Tibial artery (tissue), 4 donors: ENCODE measurements at regions of chr6 and their contacts with region 1.

Region 1: DNA sequence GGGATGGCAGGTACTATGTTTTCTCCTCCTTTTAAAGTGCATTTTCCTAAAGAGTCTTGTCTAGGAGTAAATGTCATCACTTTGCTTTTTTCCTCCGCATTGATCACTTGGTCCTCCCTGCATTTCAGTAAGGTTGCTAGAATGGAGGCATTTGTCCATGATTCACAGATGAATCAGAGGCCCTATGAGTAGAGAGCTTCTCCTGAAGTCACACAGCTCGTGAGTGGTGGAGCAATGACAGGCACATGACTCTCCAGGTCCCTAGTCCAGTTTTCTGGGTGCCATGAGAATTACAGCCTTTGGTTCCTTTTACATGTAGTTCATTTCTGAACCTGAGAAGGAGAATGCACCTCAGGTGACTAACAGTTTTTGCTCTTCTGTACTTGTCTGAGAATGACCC is 50.5 kb downstream of the HLA-A start:
- DNase-seq: no peak
- H3K4me3 ChIP-seq: no peak overlapping the region
- H3K27ac ChIP-seq: no peak overlapping the region
- H3K4me1 ChIP-seq: no peaks in the 10 kb centered on the region
- H3K27me3 ChIP-seq: no peaks in the 10 kb centered on the region
- CTCF ChIP-seq: no peak

Region 2: DNA sequence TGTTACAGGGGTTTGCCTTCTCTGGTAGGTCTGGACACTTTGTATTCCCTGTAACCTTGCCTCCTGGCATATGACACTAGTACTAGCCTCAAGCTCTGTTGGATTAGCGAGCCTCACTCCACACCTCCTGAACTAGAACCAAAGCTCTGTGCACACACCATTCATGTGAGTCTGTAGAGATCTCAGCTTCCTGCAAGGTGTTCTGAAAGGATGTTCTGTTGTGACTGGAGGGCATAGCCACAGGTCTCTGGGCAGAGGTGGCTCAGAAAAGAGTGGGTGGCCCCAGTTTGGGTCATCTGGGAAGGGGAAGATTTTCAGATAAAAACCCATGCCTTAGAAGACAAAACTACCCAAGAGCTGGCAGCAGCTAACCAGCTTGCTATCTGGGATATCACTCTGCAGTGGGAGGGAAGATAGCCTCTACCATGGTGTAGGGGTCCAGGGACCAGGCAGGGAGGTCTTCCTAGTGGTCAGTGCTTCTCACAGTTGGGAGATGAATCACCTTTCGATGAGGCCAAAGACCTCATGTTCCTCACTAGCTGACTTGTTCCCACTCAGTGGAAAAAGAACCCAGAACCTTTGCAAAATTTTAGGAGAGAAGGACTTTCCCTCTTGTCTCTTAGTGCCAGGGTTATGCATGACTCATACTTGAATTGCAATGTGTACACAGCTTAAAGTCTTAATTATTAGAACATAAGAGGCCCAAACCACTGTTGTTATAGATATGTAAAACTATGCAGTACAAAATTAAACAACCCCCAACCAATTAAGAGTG is 228.2 kb before region 1 on chr6:
- intact Hi-C with region 1: loop called (anchors 5 kb)
- DNase-seq: no peak
- H3K4me3 ChIP-seq: no peak overlapping the region
- H3K27ac ChIP-seq: no peak overlapping the region
- H3K4me1 ChIP-seq: peaks cover 0 to 6% (median 3%) of the 10 kb centered on the region in 4 donors
- H3K27me3 ChIP-seq: no peaks in the 10 kb centered on the region
- CTCF ChIP-seq: no peak

Region 3: GRCh38 chr6:30130887-30131862 is 138.4 kb after region 1 on chr6:
- intact Hi-C with region 1: no loop called
- DNase-seq: peak in 1 of 2 donors; percentile 61
- H3K4me3 ChIP-seq: no peak overlapping the region
- H3K27ac ChIP-seq: no peak overlapping the region
- H3K4me1 ChIP-seq: peaks cover 0 to 15% (median 5%) of the 10 kb centered on the region in 4 donors
- H3K27me3 ChIP-seq: peaks cover 0 to 75% of the 10 kb centered on the region in 2 donors
- CTCF ChIP-seq: peak; percentile 90 to 92

Region 4: DNA sequence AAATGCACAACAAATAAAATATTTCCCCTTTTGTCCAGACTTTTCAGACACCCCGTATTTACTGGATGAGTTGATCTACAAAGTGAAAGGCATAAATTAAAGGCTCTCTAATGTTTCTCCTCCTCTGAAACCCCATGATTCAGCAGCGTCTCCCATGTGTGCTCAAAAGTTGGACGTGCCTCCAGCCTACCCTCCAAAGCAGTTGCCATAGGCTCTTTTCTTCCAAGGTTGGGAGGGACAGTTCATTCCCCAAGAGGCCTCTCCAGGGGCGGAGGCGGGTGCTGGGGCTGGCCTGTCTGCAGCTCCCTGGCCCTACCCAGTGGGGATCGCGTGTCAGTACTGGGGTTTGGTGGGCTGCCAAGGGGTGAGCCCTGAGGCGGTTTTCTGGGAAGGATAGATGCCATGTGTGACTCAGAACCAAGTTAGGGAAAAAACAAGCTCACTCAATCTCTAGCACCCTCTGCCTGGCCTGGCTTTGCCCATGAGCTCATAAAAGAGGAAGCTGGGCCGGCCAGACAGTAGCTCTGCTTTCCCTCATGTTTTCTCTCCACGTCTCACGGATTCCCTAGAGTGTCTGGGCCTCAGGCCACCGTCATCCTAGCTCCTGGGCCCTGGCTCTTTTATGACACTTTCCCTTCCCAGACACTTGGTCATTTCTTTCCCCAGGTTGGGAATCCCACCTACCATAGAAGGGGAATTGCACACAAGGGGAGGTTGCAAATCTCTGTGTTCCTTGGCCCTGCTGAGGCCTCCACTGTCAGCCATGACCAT is 759.5 kb after region 1 on chr6:
- intact Hi-C with region 1: no loop called
- DNase-seq: peak; percentile 98 to 99
- H3K4me3 ChIP-seq: no peak overlapping the region
- H3K27ac ChIP-seq: peak overlapping the region; percentile 89 to 90
- H3K4me1 ChIP-seq: peaks cover 0 to 57% (median 27%) of the 10 kb centered on the region in 4 donors
- H3K27me3 ChIP-seq: no peaks in the 10 kb centered on the region
- CTCF ChIP-seq: no peak